Mammary epithelial cell (primary cell): ENCODE measurements at regions of chr4 and their contacts with region 1.

Region 1: GRCh38 chr4:156475322-156475721 is 496.3 kb downstream of the PDGFC start:
- DNase-seq: peak; percentile 64
- H3K4me3 ChIP-seq: no peak overlapping the region
- H3K27ac ChIP-seq: peak overlapping the region; percentile 86
- H3K4me1 ChIP-seq: peaks cover 17% of the 10 kb centered on the region
- H3K27me3 ChIP-seq: no peaks in the 10 kb centered on the region
- CTCF ChIP-seq: peak; percentile 62 to 66

Region 2: DNA sequence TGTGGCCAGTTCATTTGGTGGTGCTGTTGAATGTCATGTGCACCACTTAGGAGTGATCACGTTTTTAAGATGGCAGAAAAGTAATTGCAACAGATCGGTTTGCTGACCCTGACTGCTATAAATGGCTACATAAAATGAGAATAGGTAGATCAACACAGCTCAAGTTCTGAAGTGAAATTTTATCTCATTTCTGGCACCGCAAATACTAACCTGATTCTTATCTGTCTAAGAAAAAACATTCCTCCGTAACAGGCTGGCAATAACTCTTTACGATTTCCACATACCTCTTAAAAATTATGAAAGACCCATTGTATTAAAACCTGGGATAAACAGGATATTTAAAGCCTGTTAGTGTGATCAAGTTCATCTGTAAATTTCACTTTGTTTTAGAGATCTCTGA is 108.8 kb after region 1 on chr4:
- CTCF ChIA-PET with region 1: no interaction called
- dilution Hi-C with region 1: no loop called
- in situ Hi-C with region 1: no loop called
- intact Hi-C with region 1: loop called (anchors 5 kb)
- DNase-seq: peak; percentile 62
- H3K4me3 ChIP-seq: peak overlapping the region in 1 of 3 experiments; percentile 8
- H3K27ac ChIP-seq: peak overlapping the region; percentile 4
- H3K4me1 ChIP-seq: peaks cover 9% of the 10 kb centered on the region
- H3K27me3 ChIP-seq: no peaks in the 10 kb centered on the region
- CTCF ChIP-seq: no peak

Region 3: GRCh38 chr4:156799121-156799589 is 323.8 kb after region 1 on chr4:
- CTCF ChIA-PET with region 1: no interaction called
- dilution Hi-C with region 1: no loop called
- in situ Hi-C with region 1: no loop called
- intact Hi-C with region 1: loop called (anchors 5 kb)
- DNase-seq: peak; percentile 60
- H3K4me3 ChIP-seq: peak overlapping the region in 1 of 3 experiments; percentile 2
- H3K27ac ChIP-seq: peak overlapping the region; percentile 88
- H3K4me1 ChIP-seq: peaks cover 38% of the 10 kb centered on the region
- H3K27me3 ChIP-seq: no peaks in the 10 kb centered on the region
- CTCF ChIP-seq: no peak

Region 4: DNA sequence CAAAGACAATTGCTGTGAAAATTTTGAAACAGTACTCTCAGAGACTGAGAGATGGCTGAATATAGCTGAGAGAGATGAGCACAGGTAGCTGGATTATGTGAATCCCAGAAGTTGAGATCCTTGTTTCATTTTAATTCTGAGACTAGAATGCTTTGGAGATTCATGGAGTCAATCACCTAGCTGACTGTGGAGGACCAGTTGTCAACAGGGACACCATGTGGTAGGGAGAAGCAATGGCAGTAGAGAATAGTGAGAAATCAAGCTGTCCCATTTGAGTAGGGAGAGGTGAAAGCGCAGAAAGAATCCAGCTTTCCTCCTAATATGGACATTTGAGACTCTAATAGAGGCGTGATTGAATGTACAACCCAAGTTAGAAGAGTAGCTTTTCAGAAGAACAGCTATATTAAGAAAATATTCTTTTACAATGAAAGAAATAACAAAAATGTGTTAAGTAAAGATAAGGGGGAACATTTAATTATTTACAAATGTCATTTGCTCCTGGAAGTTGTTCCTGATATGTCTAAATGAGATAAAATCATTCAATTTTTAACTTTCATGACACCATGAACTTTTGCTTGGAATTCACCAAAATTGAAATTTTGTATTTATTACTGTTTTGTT is 570.3 kb after region 1 on chr4:
- CTCF ChIA-PET with region 1: interaction called, 7 read pairs
- dilution Hi-C with region 1: no loop called
- in situ Hi-C with region 1: loop called (anchors 5 to 10 kb)
- intact Hi-C with region 1: loop called (anchors 1 kb)
- DNase-seq: peak; percentile 66
- H3K4me3 ChIP-seq: no peak overlapping the region
- H3K27ac ChIP-seq: no peak overlapping the region
- H3K4me1 ChIP-seq: peaks cover 3% of the 10 kb centered on the region
- H3K27me3 ChIP-seq: no peaks in the 10 kb centered on the region
- CTCF ChIP-seq: peak; percentile 93

Region 5: DNA sequence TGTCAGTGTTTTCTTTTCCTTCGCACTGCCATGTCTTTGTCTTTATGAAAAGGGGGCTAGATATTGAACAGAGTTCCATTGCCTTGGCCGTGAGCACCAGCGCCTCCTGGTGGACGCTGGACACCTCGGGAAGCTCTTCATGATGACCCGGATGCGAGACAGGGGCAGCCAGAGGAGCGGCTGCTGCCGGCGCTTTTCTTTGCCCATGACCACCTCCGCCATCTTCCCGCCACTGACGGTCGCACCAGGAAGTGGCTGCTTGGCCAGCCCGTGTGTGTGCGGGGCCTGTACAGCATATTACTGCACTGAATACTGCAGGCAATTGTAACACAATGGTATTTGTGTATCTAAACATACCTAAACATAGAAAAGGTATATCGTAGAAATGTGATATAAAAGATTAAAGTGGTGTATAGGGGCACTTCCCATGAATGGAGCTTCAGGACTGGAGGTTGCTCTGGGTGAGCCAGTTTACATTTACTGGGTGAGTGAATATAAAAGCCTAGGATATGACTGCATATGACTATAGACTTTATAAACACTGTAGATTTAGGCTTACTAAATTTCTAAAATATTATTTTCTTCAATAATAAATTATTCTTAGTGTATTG is 729.4 kb after region 1 on chr4:
- CTCF ChIA-PET with region 1: no interaction called
- dilution Hi-C with region 1: no loop called
- in situ Hi-C with region 1: no loop called
- intact Hi-C with region 1: loop called (anchors 1 kb)
- DNase-seq: no peak
- H3K4me3 ChIP-seq: no peak overlapping the region
- H3K27ac ChIP-seq: no peak overlapping the region
- H3K4me1 ChIP-seq: no peaks in the 10 kb centered on the region
- H3K27me3 ChIP-seq: no peaks in the 10 kb centered on the region
- CTCF ChIP-seq: peak; percentile 58 to 67